ENCODE measurements at regions of chr1 and their contacts with region 1.

Region 1: GRCh38 chr1:111399792-111400610 is 27.5 kb downstream of the OVGP1 start:
- DNase-seq: peak in 1 of 3 donors; percentile 86
- ATAC-seq: no peak
- H3K4me3 ChIP-seq: no peak overlapping the region
- H3K4me1 ChIP-seq: no peaks in the 10 kb centered on the region
- CTCF ChIP-seq: peak; percentile 40

Region 2: DNA sequence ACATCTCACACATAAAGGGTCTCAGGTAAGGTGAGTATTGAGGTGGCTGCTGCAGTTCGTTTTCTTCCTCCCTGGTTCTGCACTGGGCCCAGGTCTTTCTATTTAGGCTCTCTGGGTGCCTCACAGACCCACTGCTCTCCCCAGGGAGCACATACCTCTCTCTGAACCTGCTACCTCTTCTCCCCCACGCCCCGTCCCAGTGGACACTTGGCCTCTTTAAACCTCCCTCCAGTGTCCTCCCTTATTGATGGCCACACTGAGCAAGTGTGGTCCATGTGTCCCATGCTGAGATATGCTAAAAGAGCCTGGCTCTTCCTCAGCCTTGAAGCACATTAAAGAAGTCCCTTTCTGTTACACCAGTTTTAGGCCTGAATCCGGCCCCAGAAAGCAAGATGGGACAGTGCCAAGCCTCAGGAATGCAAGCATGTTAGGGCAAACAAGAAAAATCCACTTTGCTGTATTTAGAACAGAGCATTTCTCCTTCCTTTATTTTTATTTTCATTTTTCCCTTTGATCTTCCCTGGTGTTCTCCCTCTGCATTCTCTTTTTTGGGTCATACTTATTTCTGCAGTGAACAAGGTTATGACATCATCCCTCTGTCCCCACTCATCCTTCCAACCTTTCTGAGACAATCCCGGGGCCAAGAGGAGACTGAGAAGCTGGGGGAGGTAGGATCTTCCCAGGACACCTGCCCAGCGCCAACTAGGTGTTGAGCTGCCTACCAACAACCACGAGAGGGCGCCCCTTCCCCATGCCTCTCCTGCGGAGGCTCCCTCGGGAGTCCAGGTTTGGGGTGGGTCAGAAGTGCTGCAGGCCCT is 177.5 kb before region 1 on chr1:
- intact Hi-C with region 1: loop called (anchors 5 to 10 kb)
- DNase-seq: peak; percentile 62 to 85 (median 76)
- ATAC-seq: peak; percentile 79
- H3K4me3 ChIP-seq: no peak overlapping the region
- H3K4me1 ChIP-seq: no peaks in the 10 kb centered on the region
- CTCF ChIP-seq: peak; percentile 75